Posterior vena cava (tissue), 2 donors: ENCODE measurements at regions of chrX and their contacts with region 1.

Region 1: GRCh38 chrX:149799938-149800337 is 18.2 kb downstream of the MAGEA9 start:
- DNase-seq: no peak

Region 2: GRCh38 chrX:149818652-149819051 is 18.7 kb after region 1 on chrX:
- intact Hi-C with region 1: loop called in 1 of 2 experiments (anchors 1 kb)
- DNase-seq: no peak